ENCODE measurements at regions of chr17 and their contacts with region 1.

Region 1: DNA sequence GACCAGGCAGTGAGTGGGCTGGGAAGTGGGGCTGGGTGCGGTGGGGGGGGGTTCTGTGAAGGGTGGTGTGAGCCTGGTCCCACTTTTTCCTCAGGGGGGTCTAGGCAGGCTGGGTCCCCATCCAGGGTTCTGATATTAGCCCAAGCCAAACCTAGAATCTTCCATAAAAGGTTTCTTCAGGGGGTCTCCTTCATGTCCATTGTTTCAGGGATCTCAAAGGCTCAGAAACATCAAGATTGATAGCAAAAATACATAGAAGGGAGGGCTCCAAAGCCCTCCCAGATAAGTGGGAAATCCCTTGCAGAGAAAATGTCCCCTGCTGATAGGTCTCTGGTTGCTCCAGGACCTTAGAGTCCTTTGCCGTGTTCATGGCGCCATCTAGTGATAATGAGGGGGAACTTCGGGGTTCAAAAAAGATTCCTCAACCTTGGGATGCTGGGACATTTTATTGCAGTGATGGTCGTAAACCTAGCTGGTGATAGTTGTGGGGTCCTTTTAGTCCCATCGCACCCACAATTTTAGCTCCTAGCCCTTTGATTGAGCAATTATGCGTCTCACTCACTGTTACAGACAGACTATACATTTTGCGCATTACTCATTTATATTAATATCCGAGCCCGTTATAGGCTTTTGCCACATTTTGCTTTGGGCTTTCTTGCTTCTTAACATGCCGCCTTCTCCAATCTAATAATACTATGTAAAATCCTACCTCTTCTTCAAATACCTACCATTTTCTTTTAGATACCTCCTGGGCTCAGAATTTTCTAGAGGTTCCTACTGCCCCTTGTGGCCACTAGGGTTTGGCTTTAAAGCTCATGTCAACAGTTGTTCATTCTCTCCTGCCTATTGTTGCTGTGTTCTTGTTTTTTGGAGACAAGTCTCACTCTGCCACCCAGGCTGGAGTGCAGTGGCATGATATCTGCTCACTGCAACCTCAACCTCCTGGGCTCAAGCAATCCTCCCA is 35.1 kb downstream of the IGF2BP1 start:
- DNase-seq: peak; percentile 80
- H3K4me3 ChIP-seq: no peak overlapping the region
- H3K27ac ChIP-seq: no peak overlapping the region
- H3K4me1 ChIP-seq: peaks cover 35% of the 10 kb centered on the region
- H3K27me3 ChIP-seq: no peaks in the 10 kb centered on the region
- CTCF ChIP-seq: peak; percentile 51 to 67
- POLR2A ChIP-seq: peak; percentile 53

Region 2: DNA sequence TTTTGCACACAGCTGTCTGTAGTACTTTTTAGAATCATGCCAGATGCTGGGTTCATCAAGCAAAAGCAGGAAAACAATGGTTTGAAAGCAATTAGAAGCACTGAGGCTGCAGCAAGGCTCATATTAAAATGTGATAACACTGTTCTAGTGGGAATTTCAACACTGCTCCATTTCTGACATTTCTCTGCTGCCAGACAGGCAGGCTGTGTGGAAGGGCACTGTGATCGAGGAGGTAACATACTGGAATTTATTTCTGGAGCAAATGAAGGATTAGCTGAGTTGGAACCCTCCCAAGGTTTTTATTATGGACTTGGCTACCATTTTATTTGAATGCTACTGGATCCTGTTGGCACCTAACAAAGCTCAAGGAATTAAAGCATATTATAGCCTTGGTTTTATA is 669.1 kb before region 1 on chr17:
- CTCF ChIA-PET with region 1: no interaction called
- POLR2A ChIA-PET with region 1: no interaction called
- dilution Hi-C with region 1: no loop called
- intact Hi-C with region 1: no loop called
- DNase-seq: no peak
- H3K4me3 ChIP-seq: no peak overlapping the region
- H3K27ac ChIP-seq: no peak overlapping the region
- H3K4me1 ChIP-seq: no peaks in the 10 kb centered on the region
- H3K27me3 ChIP-seq: peaks cover 34 to 40% of the 10 kb centered on the region in 2 experiments
- CTCF ChIP-seq: no peak
- POLR2A ChIP-seq: no peak

Region 3: DNA sequence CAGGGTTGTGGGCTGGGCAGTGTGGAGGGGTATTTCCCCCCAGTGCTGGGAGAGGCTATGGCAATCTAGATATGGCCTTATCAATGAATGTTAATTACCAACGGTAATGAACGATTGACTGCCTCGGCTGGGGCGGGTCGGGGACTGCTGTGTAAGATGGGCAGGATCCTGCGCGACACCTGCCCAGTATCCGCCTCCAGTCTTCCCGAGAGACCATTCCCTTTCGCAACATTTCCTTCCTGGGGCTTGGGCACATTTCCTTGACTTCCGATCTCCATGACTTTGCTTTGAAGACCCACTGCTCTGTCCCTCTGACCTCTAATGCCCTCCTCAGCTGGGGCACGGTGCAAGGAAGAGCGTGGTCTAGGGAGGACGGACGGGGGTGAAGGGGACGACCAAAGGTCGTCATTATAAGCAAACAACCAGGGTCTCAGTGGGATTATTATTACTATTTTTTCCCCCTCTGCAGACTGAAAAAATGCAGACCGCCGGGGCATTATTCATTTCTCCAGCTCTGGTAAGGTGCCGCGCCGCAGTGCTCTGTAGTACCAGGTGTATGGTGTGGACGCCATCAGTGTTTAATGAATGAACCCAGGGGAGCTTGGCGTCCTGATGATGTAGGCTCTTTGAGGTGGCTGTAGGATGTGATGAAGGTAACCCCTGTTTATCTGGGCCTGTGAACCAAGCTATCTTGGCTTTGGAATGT is 139.2 kb before region 1 on chr17:
- CTCF ChIA-PET with region 1: interaction called, 20 read pairs
- POLR2A ChIA-PET with region 1: no interaction called
- dilution Hi-C with region 1: no loop called
- intact Hi-C with region 1: loop called (anchors 2 kb)
- DNase-seq: no peak
- H3K4me3 ChIP-seq: peak overlapping the region; percentile 3 to 79 (median 61)
- H3K27ac ChIP-seq: peak overlapping the region; percentile 44
- H3K4me1 ChIP-seq: peaks cover 11% of the 10 kb centered on the region
- H3K27me3 ChIP-seq: no peaks in the 10 kb centered on the region
- CTCF ChIP-seq: no peak
- POLR2A ChIP-seq: peak; percentile 48

Region 4: DNA sequence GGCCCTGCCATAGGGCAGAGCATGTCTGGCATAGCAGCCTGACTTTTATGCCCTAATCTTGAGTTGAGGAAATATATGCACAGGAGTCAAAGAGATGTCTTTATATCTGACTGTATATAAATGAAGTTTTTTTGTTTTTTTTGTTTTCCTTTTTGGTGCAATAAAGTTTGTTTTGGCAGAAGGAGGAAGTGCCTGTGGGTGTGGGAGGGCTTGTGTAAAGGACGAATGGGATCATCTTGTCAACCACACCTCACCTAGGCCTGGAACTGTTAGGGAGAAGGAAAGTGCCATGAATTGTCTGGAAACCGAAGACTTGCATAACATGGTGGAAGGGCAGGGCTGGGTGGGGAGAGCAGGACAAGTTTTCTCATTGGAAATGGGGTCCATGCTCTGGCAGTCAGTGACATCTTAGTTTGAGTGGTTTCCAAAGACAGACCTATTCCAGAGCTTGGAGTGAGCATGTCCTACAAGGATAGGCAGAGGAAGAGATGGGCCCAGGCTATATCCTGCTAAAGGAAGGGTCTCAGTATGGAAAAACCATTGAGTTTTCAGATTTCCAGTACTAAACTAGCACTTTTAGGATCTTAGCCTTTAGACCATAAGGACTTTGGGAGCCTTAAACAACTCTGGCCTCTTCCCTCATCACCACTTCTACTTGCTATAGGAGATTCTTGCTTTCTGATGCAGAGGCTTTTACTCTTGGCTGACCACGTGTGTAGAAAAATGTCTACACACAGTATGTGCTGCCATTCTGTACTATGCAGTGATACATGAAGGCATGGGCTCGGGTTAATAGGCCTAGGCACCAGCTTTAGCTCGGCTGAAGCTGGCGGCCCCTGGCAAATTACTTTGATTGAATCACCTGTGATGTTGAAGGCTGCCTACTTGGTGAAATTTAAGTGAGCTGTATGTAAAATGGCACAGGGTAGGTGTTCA is 103.1 kb before region 1 on chr17:
- CTCF ChIA-PET with region 1: interaction called, 30 read pairs
- POLR2A ChIA-PET with region 1: interaction called, 4 read pairs
- dilution Hi-C with region 1: no loop called
- intact Hi-C with region 1: no loop called
- DNase-seq: no peak
- H3K4me3 ChIP-seq: no peak overlapping the region
- H3K27ac ChIP-seq: no peak overlapping the region
- H3K4me1 ChIP-seq: peaks cover 3% of the 10 kb centered on the region
- H3K27me3 ChIP-seq: no peaks in the 10 kb centered on the region
- CTCF ChIP-seq: no peak
- POLR2A ChIP-seq: peak; percentile 36

Region 5: GRCh38 chr17:48961516-48962233 is 70.6 kb before region 1 on chr17:
- CTCF ChIA-PET with region 1: interaction called, 32 read pairs
- POLR2A ChIA-PET with region 1: no interaction called
- dilution Hi-C with region 1: no loop called
- intact Hi-C with region 1: no loop called
- DNase-seq: peak; percentile 40
- H3K4me3 ChIP-seq: no peak overlapping the region
- H3K27ac ChIP-seq: no peak overlapping the region
- H3K4me1 ChIP-seq: peaks cover 8% of the 10 kb centered on the region
- H3K27me3 ChIP-seq: no peaks in the 10 kb centered on the region
- CTCF ChIP-seq: no peak
- POLR2A ChIP-seq: no peak

Region 6: GRCh38 chr17:48997083-48997826 is 35.0 kb before region 1 on chr17 and contains the start of gene IGF2BP1:
- CTCF ChIA-PET with region 1: interaction called, 133 read pairs
- POLR2A ChIA-PET with region 1: no interaction called
- dilution Hi-C with region 1: no loop called
- intact Hi-C with region 1: loop called (anchors 1 kb)
- DNase-seq: peak; percentile 80
- H3K4me3 ChIP-seq: peak within 1 kb of the TSS; percentile 80 to 85 (median 82)
- H3K27ac ChIP-seq: peak within 1 kb of the TSS; percentile 80
- H3K4me1 ChIP-seq: peaks cover 32% of the 10 kb centered on the region
- H3K27me3 ChIP-seq: peaks cover 20 to 34% of the 10 kb centered on the region in 2 experiments
- CTCF ChIP-seq: no peak
- POLR2A ChIP-seq: no peak
- total RNA-seq, gene IGF2BP1: 91.7 and 99.5 TPM in 2 replicates

Region 7: DNA sequence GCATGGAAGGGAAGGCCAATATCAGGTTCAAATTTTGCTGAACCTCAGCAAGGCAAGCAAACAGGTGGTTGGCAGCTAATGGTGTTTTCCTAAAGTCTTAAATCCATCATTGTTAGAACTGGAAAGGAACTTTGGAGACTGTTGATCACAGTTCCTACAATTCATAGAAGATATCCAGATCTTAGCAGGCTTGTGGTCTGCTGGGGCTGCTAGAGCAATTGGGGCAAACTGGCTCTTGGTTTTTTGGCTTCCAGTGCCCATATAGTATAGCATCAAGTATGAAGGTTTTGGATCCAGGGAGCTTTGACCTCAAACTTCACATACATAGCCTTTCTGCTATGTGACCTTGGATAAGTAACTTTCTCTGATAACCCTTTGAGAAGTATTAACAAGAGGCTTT is 14.7 kb after region 1 on chr17:
- CTCF ChIA-PET with region 1: interaction called, 11 read pairs
- POLR2A ChIA-PET with region 1: interaction called, 3 read pairs
- dilution Hi-C with region 1: no loop called
- intact Hi-C with region 1: no loop called
- DNase-seq: no peak
- H3K4me3 ChIP-seq: no peak overlapping the region
- H3K27ac ChIP-seq: no peak overlapping the region
- H3K4me1 ChIP-seq: no peaks in the 10 kb centered on the region
- H3K27me3 ChIP-seq: no peaks in the 10 kb centered on the region
- CTCF ChIP-seq: no peak
- POLR2A ChIP-seq: no peak